Panc1 (cell line): ENCODE measurements at regions of chr11 and their contacts with region 1.

Region 1: GRCh38 chr11:68213555-68214174 is 569 bp upstream of the KMT5B start:
- DNase-seq: no peak
- ATAC-seq: peak; percentile 67
- H3K4me3 ChIP-seq: peak overlapping the region; percentile 73 to 84
- H3K27ac ChIP-seq: peak overlapping the region; percentile 94
- H3K4me1 ChIP-seq: peaks cover 43% of the 10 kb centered on the region
- H3K27me3 ChIP-seq: no peaks in the 10 kb centered on the region
- CTCF ChIP-seq: no peak

Region 2: GRCh38 chr11:68173926-68174325 is 39.7 kb before region 1 on chr11:
- CTCF ChIA-PET with region 1: no interaction called
- POLR2A ChIA-PET with region 1: no interaction called
- in situ Hi-C with region 1: loop called (anchors 5 kb)
- intact Hi-C with region 1: no loop called
- DNase-seq: no peak
- ATAC-seq: no peak
- H3K4me3 ChIP-seq: no peak overlapping the region
- H3K27ac ChIP-seq: no peak overlapping the region
- H3K4me1 ChIP-seq: no peaks in the 10 kb centered on the region
- H3K27me3 ChIP-seq: no peaks in the 10 kb centered on the region
- CTCF ChIP-seq: no peak

Region 3: GRCh38 chr11:68297812-68298658 is 84.4 kb after region 1 on chr11:
- CTCF ChIA-PET with region 1: interaction called, 13 read pairs
- POLR2A ChIA-PET with region 1: interaction called, 11 read pairs
- in situ Hi-C with region 1: no loop called
- intact Hi-C with region 1: loop called (anchors 10 kb)
- DNase-seq: no peak
- ATAC-seq: peak; percentile 95
- H3K4me3 ChIP-seq: peak overlapping the region in 1 of 2 experiments; percentile 47; a peak in 2 of 4 replicates
- H3K27ac ChIP-seq: peak overlapping the region; percentile 36
- H3K4me1 ChIP-seq: peaks cover 24% of the 10 kb centered on the region
- H3K27me3 ChIP-seq: no peaks in the 10 kb centered on the region
- CTCF ChIP-seq: peak; percentile 100